Esophagus muscularis mucosa (tissue), 4 donors: ENCODE measurements at regions of chr13 and their contacts with region 1.

Region 1: GRCh38 chr13:98142380-98143156 is at the start of gene FARP1:
- DNase-seq: no peak
- H3K4me3 ChIP-seq: peak within 1 kb of the TSS; percentile 87 to 94 (median 88)
- H3K27ac ChIP-seq: peak within 1 kb of the TSS; percentile 71 to 83 (median 74)
- H3K4me1 ChIP-seq: peaks cover 19 to 31% (median 29%) of the 10 kb centered on the region in 4 donors
- H3K27me3 ChIP-seq: no peaks in the 10 kb centered on the region
- CTCF ChIP-seq: peak; percentile 51 to 72 (median 57)
- EP300 ChIP-seq: no peak
- POLR2A ChIP-seq: no peak
- total RNA-seq, gene FARP1: 21.2 to 56.5 (median 35.1) TPM

Region 2: DNA sequence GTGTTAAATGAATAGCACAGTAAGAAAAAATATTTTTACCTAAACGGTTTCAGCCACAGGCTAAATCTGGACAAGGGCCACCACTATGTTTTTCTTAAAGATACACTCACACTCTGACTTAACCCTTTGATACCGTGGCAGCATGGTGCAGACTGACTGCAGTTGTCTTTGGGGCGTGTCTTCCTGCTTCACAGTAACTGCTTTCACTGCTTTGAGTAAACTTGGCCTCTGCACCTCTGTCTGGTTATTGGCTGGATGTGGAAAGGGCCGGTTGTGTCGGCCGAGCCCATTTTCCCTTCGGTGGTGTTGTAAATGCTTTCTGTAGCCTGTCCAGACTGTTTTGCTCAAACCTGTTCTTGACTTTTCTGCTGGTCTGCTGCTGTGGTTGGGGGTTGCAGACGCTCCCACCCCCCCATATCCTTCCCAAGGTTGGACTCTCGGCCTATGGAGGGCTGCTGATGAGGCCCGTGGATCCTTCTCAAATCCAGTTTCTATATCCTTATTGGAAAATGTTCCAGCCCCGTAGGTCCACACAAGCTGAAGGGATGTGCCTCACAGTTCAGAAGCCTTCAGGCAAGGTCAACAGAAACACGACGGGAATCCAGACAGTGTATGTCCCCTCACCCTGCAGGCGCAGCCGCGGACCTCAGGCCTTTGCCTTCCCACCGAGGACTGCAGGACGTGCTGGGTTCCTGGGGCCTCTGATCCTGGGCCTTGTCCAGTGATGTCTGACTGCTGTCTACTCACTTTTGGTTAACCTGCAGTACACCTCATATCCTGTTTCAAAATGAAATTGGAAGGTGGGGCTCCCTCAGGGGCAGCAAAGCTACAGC is 124.7 kb after region 1 on chr13:
- intact Hi-C with region 1: no loop called
- DNase-seq: no peak
- H3K4me3 ChIP-seq: peak overlapping the region; percentile 2 to 40 (median 22)
- H3K27ac ChIP-seq: peak overlapping the region; percentile 12 to 44 (median 30)
- H3K4me1 ChIP-seq: peaks cover 3 to 23% (median 21%) of the 10 kb centered on the region in 4 donors
- H3K27me3 ChIP-seq: no peaks in the 10 kb centered on the region
- CTCF ChIP-seq: no peak
- EP300 ChIP-seq: no peak
- POLR2A ChIP-seq: no peak

Region 3: DNA sequence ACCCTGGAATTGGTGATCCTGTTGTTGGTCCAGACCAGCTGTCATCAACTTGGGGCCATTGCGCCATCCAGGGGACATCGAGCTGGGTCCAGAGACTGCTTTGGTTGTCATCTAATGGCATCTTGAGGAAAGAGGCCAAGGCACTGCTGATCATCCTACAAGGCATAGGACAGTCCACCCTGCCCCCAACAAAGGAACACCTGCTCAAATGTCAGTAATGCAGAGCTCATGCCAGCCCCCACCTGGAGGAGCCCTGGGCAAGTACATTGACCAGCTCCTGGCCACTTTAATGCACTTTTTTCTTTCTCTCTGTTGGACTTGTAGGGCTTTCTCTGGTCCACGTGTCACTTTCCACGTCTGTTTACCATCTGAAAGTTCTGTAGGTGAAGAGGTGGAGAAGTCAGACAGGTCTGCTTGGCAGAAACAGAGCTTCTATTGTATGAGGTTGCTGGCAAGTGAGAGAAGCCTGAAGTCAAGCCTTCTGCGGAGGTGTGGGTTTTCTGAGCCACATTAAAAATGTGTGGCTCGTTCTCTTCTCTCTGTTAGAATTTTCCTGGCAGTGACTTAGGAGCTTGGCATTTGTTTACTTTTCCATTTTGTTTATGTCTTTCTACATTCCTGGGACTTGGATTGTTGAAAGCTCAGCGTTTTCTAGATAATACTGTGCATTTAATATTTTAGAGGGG is 158.5 kb after region 1 on chr13:
- intact Hi-C with region 1: loop called (anchors 10 kb)
- DNase-seq: no peak
- H3K4me3 ChIP-seq: peak overlapping the region in 3 of 4 donors; percentile 8 to 18 (median 14)
- H3K27ac ChIP-seq: peak overlapping the region; percentile 51 to 63 (median 52)
- H3K4me1 ChIP-seq: peaks cover 29 to 50% (median 36%) of the 10 kb centered on the region in 4 donors
- H3K27me3 ChIP-seq: no peaks in the 10 kb centered on the region
- CTCF ChIP-seq: no peak
- EP300 ChIP-seq: no peak
- POLR2A ChIP-seq: no peak

Region 4: DNA sequence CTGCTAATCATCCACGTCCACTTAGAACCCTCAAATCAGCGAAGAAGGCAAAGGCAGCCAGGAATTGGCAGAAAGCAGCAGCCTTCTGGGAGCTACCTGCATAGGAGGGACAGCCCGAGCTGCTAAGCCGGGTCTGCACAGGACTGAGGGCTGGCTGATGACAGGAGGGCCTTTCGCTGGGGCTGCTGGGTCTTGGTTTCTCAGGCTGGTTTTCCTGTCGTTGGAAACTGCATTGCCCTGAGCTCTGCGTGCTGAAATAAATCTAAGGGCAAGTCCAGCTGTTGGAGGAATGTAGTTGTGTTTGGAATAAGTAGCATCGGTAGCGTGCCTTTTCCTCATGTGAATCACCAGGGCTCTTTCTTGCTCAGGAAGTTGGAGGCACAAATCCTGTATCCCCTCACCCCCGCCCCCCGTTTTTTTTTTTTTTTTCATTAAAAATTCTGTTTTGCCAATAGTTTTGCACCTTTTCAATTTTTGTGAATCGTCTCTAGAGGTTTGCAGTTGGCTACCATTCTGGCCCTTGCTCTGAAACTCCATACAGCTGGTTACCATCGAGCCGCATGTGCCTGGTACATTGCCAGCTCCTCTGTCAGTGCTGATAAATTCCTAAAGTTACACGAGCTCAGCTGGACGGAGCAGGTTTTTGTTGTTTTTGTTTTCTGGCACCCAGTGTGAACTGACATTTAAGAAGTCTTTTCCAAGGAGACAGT is 228.4 kb after region 1 on chr13:
- intact Hi-C with region 1: loop called (anchors 5 kb)
- DNase-seq: no peak
- H3K4me3 ChIP-seq: no peak overlapping the region
- H3K27ac ChIP-seq: peak overlapping the region in 1 of 4 donors; percentile 44
- H3K4me1 ChIP-seq: peaks cover 5 to 15% (median 14%) of the 10 kb centered on the region in 4 donors
- H3K27me3 ChIP-seq: no peaks in the 10 kb centered on the region
- CTCF ChIP-seq: no peak
- EP300 ChIP-seq: no peak
- POLR2A ChIP-seq: no peak

Region 5: DNA sequence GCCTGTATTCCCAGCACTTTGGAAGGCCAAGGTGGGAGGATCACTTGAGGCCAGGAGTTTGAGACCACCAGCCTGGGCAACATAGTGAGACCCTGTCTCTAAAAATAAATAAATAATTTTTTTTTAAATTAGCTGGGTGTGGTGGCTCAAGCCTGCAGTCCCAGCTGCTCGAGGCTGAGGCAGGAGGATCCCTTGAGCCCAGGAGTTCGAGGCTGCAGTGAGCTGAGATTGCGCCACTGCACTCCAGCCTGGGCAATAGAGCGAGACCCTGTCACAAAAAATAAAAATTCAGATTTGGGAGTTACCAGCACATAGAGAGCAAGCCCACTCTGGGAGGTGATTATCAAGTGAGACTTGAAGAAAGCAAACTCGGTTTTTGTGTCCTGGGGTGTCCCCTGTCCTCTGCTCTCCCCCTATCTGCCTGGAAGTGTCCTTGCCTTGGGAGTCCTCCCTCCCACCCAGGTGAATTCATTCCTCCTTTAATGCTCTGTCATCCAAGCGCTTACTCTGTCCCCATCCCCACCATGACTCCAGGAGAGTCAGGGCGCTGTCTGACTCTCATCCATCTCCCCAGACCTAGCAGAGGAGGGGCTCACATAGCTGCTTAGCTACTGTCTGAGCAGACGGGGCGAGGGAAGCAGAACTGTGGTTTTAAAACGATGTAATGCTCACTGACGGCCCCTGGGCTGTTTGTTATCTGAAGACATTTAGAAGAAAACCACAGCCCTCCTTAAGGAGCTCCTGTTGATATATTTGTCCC is 287.6 kb after region 1 on chr13:
- intact Hi-C with region 1: loop called (anchors 10 kb)
- DNase-seq: no peak
- H3K4me3 ChIP-seq: no peak overlapping the region
- H3K27ac ChIP-seq: no peak overlapping the region
- H3K4me1 ChIP-seq: no peaks in the 10 kb centered on the region
- H3K27me3 ChIP-seq: no peaks in the 10 kb centered on the region
- CTCF ChIP-seq: no peak
- EP300 ChIP-seq: no peak
- POLR2A ChIP-seq: no peak